ENCODE measurements at regions of chr11 and their contacts with region 1.

Region 1: DNA sequence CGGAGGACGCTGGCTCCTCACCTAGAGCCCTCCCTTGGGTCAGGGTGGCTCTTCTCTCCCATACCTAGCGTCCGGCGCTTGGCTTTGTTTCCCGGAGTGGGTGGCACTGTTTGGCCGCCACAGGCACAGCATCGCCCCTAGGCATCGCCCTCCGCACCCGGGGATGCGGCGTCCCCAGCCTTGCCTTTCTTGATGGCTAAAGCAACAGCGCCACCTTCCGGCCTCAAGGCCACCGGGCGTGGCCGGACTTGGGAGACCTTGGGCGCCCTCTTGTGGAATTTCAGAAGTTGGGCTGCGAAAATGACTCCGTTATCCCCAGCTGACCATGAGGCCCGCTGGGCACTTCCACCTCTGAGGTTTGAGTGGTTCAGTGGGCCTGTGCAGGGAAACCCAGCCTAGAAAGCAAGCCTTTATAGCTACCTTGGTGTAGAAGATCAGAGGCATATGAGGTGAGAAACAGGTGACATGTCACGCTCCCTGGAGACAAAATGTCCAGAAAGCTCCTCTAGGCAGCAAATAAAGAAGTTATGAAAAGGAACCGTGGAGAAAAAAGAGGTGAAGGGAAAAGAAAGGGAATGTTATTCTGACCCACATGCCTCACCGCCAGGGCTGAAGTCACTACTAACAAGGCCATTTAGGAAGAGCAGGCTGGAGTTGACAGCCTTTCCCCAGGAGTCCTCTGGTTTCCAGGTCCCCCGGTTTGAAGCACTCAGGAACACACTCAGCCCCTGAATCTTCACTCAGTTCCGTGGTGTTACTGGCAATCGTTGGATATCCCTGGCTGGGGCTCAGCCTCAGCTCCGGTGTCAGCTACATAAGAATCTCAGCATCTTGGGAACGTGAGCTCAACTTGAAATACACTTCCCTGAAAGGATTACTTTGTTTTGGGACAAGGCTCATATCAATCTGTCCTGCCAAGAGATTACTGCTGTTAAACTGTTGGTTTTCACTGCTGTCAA is 54.1 kb downstream of the SNX19 start:
- DNase-seq: no peak
- H3K4me3 ChIP-seq: no peak overlapping the region
- H3K27me3 ChIP-seq: no peaks in the 10 kb centered on the region
- CTCF ChIP-seq: peak; percentile 99

Region 2: DNA sequence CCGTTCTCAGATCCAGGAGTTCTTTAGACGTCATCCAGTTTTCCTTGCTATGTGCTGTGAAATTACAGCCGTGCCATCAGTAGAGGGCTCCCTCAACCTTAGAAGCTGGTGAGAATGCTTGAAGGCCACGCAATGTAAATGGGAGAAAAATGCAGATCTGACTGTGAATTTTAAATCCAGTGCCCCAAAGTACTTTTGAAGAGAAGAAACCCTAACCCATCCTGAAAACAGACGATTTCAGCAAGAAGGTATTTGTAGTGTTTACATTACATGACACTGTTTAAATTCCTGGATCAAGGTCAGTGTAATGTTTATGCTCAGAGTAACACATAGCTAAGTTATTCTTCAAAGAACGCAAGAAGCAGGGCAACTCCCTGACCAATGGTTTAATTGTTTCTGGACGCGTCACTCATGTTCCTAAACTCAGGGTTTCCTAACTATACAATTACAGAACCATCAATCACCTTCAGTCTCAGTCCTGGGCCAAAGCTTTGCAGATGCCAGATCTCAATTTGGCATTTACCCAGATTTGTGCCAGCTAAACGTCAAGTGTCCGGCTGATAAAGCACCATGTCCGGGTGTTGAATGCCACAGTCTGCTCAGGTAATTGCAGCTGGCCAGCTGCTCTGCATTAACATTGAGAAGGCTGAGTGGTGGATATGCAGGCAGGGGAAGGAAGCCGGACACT is 472.0 kb before region 1 on chr11:
- CTCF ChIA-PET with region 1: interaction called, 10 read pairs
- POLR2A ChIA-PET with region 1: no interaction called
- DNase-seq: no peak
- H3K4me3 ChIP-seq: no peak overlapping the region
- H3K27me3 ChIP-seq: peaks cover 31% of the 10 kb centered on the region
- CTCF ChIP-seq: peak; percentile 70

Region 3: GRCh38 chr11:130448416-130449309 is 413.5 kb before region 1 on chr11 and contains the start of gene ADAMTS15:
- CTCF ChIA-PET with region 1: interaction called, 51 read pairs
- POLR2A ChIA-PET with region 1: no interaction called
- DNase-seq: no peak
- H3K4me3 ChIP-seq: peak within 1 kb of the TSS; percentile 56
- H3K27me3 ChIP-seq: no peaks in the 10 kb centered on the region
- CTCF ChIP-seq: no peak
- polyA plus RNA-seq, gene ADAMTS15: 2.7 and 5.6 TPM in 2 replicates

Region 4: DNA sequence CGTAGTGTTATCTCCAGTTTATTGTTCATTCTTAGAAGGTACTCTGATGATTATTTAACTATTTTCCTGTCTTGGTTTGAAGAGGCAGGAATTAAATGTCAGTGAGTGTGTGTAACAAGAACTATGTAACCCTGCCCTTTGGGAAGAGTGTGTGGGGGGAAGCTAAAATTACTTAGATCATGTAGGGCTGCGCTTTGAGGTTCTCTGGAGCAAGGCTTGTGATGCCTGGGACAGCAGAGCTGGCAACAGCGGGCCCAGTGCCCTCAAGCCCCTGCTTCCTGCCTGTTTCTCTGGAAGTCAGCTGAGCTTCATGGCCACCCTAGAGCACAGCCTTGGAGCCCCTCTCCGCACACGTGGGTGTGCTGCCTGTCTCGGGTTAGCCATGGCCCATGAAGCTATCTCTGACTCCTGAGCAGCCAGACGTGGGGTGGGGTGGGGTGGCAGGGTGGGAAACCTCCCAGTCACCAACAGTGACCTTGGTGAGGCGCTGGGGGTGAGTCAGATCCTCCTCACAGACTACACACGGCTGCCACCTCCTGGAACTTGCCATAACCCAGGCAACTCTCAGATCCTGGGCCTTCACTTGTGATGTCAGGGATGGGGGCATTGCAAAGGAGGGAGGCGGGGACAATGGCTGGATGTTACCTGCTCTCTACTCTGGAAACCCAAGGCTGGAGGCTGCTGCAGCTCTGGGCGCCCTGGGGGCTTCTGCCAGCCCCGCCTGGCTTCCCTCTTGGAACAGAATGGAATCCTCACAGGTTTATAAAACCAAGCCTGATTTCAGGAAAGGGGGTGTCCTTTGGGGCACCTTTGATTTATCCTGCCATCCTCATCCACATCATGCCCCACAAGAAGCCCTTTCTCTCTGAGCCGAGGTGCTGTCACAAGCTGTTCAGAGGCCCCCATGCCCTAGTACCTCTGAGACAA is 34.5 kb before region 1 on chr11:
- CTCF ChIA-PET with region 1: interaction called, 38 read pairs
- POLR2A ChIA-PET with region 1: interaction called, 4 read pairs
- DNase-seq: no peak
- H3K4me3 ChIP-seq: no peak overlapping the region
- H3K27me3 ChIP-seq: peaks cover 2% of the 10 kb centered on the region; the same call in 1 of the 2 replicates
- CTCF ChIP-seq: peak; percentile 82

Region 5: GRCh38 chr11:130847517-130847916 is 14.7 kb before region 1 on chr11:
- CTCF ChIA-PET with region 1: interaction called, 31 read pairs
- POLR2A ChIA-PET with region 1: no interaction called
- DNase-seq: no peak
- H3K4me3 ChIP-seq: no peak overlapping the region
- H3K27me3 ChIP-seq: no peaks in the 10 kb centered on the region
- CTCF ChIP-seq: no peak

Region 6: DNA sequence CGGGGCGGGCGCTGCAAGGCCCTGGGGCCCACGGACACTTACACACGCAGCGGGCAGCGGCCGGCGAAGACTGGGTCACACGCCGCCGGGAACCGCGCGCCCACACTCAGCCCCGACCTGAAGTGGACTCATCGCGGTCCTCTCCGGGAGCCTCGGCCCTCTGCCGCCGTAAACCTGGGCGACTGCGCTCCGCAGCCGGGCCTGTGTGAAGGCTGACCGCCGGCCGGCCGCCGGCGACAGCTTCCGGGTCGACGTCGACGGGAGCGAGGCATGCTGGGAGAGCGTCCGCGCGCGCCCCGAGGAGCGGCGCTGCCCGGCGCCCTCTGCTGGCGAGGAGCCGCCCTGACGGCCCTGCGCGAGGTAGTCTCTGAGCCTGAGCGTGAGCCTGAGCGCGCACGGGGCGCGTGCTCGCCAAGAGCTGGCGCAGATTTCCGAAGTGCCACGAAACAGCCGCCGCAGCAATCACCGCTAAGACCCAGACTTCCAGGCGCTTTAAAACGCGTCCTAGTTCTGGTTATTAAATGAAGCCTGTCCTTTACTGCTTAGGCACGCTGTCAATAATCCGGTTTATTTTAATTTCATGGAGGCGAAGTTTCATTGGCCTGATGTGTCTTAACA is 54.2 kb after region 1 on chr11 and contains the start of gene SNX19:
- CTCF ChIA-PET with region 1: interaction called, 12 read pairs
- POLR2A ChIA-PET with region 1: no interaction called
- DNase-seq: peak; percentile 44
- H3K4me3 ChIP-seq: peak within 1 kb of the TSS; percentile 85
- H3K27me3 ChIP-seq: no peaks in the 10 kb centered on the region
- CTCF ChIP-seq: peak; percentile 75
- polyA plus RNA-seq, gene SNX19: 85.4 and 99.9 TPM in 2 replicates

Measured in BJ (cell line).